ENCODE measurements at regions of chr13 and their contacts with region 1.

Region 1: DNA sequence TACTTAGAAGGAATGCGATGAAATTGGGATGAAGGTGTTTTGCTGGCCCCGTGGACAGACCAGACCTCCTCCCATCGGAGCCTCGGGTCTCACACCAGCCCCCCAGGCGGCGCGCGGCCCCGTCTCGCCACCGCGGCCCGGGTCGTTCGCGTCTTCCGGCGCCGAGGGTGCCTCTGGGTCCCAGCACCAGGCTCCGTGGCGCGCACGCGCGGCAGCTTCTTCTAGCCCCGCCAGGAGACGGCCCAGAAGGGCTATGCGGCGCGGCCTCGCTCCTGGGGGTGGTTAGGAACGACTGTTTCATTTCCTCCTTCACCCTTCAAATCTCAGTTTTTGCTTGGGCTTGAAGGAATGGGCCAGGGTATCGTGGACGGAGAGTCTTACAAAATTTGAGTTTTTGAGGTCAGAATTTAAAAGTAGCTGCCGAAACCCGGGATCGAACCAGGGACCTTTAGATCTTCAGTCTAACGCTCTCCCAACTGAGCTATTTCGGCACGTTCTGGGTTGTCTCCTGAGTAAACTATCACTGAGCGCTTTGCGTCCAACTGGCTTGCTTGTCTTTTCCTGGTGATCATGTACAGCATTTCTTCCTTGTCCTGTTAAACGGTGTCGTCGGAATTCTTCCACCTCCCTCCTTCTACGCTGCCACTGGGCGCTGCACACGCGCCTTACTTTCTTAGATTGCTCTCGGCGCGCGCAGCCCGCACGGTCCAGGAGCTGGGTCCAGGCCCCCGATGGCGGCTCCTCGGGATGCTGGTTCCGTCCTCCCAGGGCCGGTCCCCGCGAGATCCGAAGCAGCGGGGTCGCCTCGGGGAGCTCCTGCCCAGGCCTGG is 46.5 kb downstream of the TGDS start:
- DNase-seq: peak; percentile 94
- ATAC-seq: peak; percentile 95
- H3K4me3 Mint-ChIP-seq: peak overlapping the region; percentile 86
- H3K27ac Mint-ChIP-seq: peak overlapping the region; percentile 96
- H3K4me1 Mint-ChIP-seq: peaks cover 20% of the 10 kb centered on the region
- H3K27me3 Mint-ChIP-seq: peaks cover 8% of the 10 kb centered on the region

Region 2: DNA sequence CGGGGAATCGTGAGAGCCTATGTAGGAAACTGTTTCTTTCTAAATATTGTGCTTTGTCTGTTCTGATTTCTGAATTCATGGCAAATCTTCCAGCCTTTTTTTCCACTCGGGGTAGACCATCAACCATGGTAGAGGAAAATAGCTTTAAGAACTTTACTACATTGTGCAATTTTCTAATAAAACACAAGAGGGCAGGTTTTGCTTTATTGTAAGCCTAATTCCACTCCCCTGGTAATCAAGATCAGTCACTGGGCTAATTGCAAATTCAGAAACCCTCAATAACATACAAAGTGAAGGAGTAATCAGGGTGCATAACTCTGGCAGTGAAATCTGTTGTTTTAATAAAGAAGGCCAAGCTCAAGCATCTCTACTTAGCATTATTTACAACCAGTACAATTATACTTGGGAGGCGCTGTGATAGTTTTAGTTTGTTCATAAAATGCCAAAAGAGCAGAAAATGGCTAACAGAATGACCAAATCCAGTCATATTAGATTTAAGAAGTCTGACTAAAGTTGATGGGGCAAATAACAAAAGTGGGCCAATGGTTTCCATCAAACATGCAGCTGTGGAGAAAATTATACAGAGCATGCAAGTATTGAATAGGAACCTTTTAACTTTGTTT is 113.7 kb before region 1 on chr13:
- CTCF ChIA-PET with region 1: interaction called, 24 read pairs
- POLR2A ChIA-PET with region 1: no interaction called
- DNase-seq: no peak
- ATAC-seq: peak; percentile 58
- H3K4me3 Mint-ChIP-seq: no peak overlapping the region
- H3K27ac Mint-ChIP-seq: no peak overlapping the region
- H3K4me1 Mint-ChIP-seq: peaks cover 25% of the 10 kb centered on the region
- H3K27me3 Mint-ChIP-seq: peaks cover 3% of the 10 kb centered on the region

Region 3: DNA sequence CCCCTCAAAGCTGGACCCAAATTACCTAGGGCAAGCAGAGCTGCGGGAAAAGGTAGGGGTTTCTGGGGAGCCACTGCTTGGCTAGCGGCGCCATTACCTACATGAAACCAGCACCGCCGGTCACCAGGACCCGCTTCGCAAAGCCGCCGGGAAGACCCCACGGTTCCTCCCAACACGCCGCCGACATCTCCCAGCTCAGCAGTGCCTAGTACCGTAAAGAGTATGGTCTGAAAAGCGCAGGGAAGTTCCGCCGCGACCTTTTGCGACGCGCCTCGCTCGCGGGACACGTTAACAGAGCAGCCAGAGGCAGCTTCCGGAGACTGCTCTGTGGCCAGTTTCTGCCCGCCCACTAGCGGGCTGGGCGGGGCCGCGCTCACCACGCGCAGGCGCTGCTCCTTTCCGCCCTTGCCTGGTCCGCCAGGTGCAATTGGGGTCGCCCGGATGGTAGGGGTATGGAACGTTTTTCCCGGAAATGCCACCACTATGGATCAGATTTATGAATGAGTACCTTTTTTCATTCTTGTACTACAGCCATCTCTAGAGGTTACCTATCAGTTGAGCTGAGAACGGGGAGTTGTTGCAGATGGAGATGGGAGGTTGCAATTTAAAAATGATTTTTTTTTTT is 46.6 kb after region 1 on chr13 and contains the start of gene TGDS:
- CTCF ChIA-PET with region 1: interaction called, 13 read pairs
- POLR2A ChIA-PET with region 1: interaction called, 35 read pairs
- DNase-seq: peak; percentile 94
- ATAC-seq: peak; percentile 97
- H3K4me3 Mint-ChIP-seq: peak within 1 kb of the TSS; percentile 84
- H3K27ac Mint-ChIP-seq: peak within 1 kb of the TSS; percentile 89
- H3K4me1 Mint-ChIP-seq: peaks cover 43% of the 10 kb centered on the region
- H3K27me3 Mint-ChIP-seq: no peaks in the 10 kb centered on the region
- total RNA-seq, gene TGDS: 17.2 to 19.2 TPM

Measured in activated CD8-positive, alpha-beta T cell treated with anti-CD3 and anti-CD28 coated beads, Interleukin-2, amount 10 ng/mL, durations not matched to agents 7 days and 5 days (primary cell).